Natural killer cell (primary cell): ENCODE measurements at regions of chr2 and their contacts with region 1.

Region 1: DNA sequence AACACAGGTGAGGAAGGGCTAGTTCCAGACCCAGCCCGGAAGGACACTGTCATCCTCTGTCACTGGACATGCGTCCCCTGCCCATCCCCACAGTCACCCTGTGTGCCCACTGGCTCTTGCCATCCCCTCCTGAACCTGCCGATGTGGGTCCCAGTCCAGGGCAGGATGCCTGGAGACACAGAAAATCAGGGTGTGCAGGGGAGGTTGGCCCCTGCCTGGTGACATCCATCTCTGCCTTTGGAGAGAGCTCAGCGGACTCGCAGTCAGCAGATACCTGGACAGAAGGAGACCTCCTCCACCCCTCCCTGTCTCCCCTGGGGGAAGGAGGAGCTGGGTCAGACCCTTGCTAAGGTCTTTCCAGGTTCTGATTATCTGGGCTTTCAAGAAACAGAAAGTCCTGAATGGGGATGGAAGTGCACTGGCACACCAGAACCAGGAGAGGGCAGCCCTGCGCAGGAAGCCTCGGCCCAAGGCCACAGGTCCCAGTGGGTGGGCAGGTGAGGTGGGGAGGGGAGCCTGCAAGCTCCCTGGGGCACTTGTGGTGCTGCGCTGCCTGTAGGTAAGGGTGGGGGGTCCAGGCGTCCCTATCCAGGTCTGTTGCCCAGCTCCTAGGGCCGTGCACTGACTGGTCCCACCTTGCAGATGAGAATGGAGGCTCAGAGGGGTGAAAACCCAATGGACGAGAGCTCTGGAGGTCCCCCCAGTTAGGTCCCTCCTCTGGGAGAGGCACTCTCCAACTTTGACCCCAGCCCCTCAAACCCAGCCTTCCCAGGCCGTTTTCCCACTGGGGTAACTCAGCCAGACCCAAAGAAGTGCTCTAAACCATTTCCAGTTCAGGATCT is 9.7 kb upstream of the OTOS start:
- DNase-seq: peak in 1 of 2 donors; percentile 55
- ATAC-seq: peak in 2 of 3 donors; percentile 64 to 67
- H3K4me3 ChIP-seq: no peak overlapping the region
- H3K4me3 Mint-ChIP-seq: no peak overlapping the region
- H3K27ac ChIP-seq: no peak overlapping the region
- H3K27ac Mint-ChIP-seq: no peak overlapping the region
- H3K4me1 ChIP-seq: no peaks in the 10 kb centered on the region
- H3K4me1 Mint-ChIP-seq: peaks cover 0 to 8% of the 10 kb centered on the region in 2 donors
- H3K27me3 ChIP-seq: no peaks in the 10 kb centered on the region
- H3K27me3 Mint-ChIP-seq: peaks cover 0 to 4% of the 10 kb centered on the region in 2 donors
- CTCF ChIP-seq: peak; percentile 41

Region 2: DNA sequence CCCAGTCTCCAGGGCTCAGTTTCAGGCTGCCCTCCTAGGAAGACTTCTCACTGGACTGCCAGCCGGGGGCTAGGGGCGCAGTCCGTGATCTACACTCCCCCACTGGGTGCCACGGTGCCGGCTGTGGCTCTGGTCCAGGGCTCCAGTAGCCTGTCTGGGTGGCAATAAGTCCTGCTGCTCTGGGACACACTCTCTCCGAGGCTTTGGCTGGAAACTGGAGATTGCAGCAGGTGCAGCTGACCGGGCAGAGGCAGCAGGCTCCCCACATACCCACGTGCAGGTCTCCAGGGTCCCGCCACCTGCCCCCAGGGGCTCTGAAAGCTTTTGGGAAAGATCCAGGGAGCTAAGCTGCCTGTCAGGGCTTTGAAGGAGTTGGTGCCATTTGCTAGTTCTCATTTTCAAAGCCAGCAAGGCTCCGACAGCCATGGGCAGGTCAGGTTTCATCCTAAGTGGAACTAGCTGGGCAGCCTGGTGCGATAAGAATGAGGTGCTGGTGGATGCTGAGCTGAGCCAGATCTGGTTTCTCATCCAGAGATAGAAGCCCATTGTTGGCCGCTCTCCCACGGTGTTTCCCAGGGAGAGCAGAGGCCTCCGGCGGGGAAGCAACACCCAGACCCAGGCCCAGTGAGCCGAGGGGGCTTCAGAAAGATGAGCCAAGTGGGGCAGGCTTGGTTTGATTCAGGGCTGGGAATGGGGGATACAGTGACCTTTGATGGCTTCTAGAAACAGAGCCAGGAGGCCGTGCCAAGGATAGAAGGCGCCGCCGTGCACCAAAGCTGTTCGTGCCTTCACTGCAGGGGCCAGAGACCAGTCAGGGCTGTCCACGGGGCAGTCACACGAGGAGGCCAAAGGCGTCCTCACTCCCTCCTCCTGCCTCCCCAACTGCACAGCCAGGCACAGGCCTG is 143.6 kb after region 1 on chr2:
- intact Hi-C with region 1: no loop called
- DNase-seq: no peak
- ATAC-seq: no peak
- H3K4me3 ChIP-seq: no peak overlapping the region
- H3K4me3 Mint-ChIP-seq: no peak overlapping the region
- H3K27ac ChIP-seq: no peak overlapping the region
- H3K27ac Mint-ChIP-seq: no peak overlapping the region
- H3K4me1 ChIP-seq: no peaks in the 10 kb centered on the region
- H3K4me1 Mint-ChIP-seq: no peaks in the 10 kb centered on the region
- H3K27me3 ChIP-seq: no peaks in the 10 kb centered on the region
- H3K27me3 Mint-ChIP-seq: no peaks in the 10 kb centered on the region
- CTCF ChIP-seq: no peak

Region 3: GRCh38 chr2:240303896-240304745 is 154.0 kb after region 1 on chr2:
- intact Hi-C with region 1: no loop called
- DNase-seq: peak in 1 of 2 donors; percentile 4
- ATAC-seq: no peak
- H3K4me3 ChIP-seq: no peak overlapping the region
- H3K4me3 Mint-ChIP-seq: no peak overlapping the region
- H3K27ac ChIP-seq: no peak overlapping the region
- H3K27ac Mint-ChIP-seq: no peak overlapping the region
- H3K4me1 ChIP-seq: no peaks in the 10 kb centered on the region
- H3K4me1 Mint-ChIP-seq: no peaks in the 10 kb centered on the region
- H3K27me3 ChIP-seq: no peaks in the 10 kb centered on the region
- H3K27me3 Mint-ChIP-seq: peaks cover 0 to 10% of the 10 kb centered on the region in 2 donors
- CTCF ChIP-seq: no peak

Region 4: GRCh38 chr2:240434728-240435456 is 284.7 kb after region 1 on chr2:
- intact Hi-C with region 1: loop called (anchors 5 kb)
- DNase-seq: peak; percentile 67 to 92
- ATAC-seq: peak; percentile 80 to 85 (median 84)
- H3K4me3 ChIP-seq: peak overlapping the region; percentile 24
- H3K4me3 Mint-ChIP-seq: peak overlapping the region; percentile 86
- H3K27ac ChIP-seq: no peak overlapping the region
- H3K27ac Mint-ChIP-seq: peak overlapping the region in 1 of 2 donors; percentile 13
- H3K4me1 ChIP-seq: peaks cover 17% of the 10 kb centered on the region
- H3K4me1 Mint-ChIP-seq: peaks cover 0 to 13% of the 10 kb centered on the region in 2 donors
- H3K27me3 ChIP-seq: peaks cover 21% of the 10 kb centered on the region
- H3K27me3 Mint-ChIP-seq: peaks cover 13 to 16% of the 10 kb centered on the region in 2 donors
- CTCF ChIP-seq: no peak